HepG2 (cell line): ENCODE measurements at regions of chr4 and their contacts with region 1.

Region 1: DNA sequence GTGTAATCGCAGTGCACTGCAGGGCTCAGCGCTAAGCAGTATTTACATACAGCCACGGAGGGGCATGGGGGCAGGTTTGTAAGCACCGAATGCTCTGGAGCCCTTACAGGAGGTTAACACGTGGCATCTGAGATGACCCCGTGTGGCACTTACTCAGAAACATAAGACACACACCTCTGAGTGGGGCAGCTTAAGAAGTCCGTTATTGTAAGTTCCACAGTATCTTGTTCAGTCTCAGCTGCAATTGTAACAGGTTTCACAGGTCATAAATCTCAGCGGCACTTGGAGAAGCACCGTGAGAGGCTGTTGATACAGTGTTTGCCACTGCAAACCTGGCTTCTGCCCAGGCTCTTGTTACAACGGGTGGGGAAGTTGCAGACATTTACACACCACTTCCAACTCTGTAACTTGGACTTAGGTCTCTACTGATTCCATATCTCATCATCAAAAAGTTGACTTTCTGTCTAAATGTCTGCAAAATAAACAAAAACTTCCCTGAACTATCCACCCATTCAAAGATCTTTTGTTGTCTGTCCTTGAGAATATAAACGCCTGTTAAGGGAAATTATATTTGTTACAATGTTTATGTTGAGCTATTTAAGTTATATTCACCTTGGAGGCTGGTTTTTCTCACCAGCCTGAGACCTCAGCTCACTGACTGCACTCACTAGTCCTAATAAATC is 10.3 kb downstream of the CPLX1 start:
- DNase-seq: peak; percentile 91
- ATAC-seq: peak; percentile 89
- H3K4me3 ChIP-seq: peak overlapping the region in 2 of 3 experiments; percentile 20 to 46; a peak in 2 of 6 replicates
- H3K27ac ChIP-seq: peak overlapping the region; percentile 67
- H3K4me1 ChIP-seq: peaks cover 38% of the 10 kb centered on the region
- H3K27me3 ChIP-seq: peaks cover 1 to 55% of the 10 kb centered on the region in 2 experiments; a peak in 4 of 5 replicates
- CTCF ChIP-seq: no peak
- EP300 ChIP-seq: peak in 1 of 2 experiments; percentile 67; a peak in 3 of 4 replicates
- POLR2A ChIP-seq: no peak
- RAD21 ChIP-seq: no peak

Region 2: GRCh38 chr4:705278-706082 is 110.1 kb before region 1 on chr4 and contains the start of gene PCGF3:
- CTCF ChIA-PET with region 1: no interaction called
- POLR2A ChIA-PET with region 1: no interaction called
- in situ Hi-C with region 1: no loop called
- intact Hi-C with region 1: no loop called
- DNase-seq: peak; percentile 83
- ATAC-seq: peak; percentile 89
- H3K4me3 ChIP-seq: peak within 1 kb of the TSS; percentile 89 to 93 (median 92)
- H3K27ac ChIP-seq: peak within 1 kb of the TSS; percentile 75
- H3K4me1 ChIP-seq: peaks cover 58% of the 10 kb centered on the region
- H3K27me3 ChIP-seq: peaks cover 3 to 12% of the 10 kb centered on the region in 2 experiments; a peak in 2 of 5 replicates
- CTCF ChIP-seq: peak; percentile 7; the same call in 1 of the 2 replicates
- EP300 ChIP-seq: no peak
- POLR2A ChIP-seq: peak in 1 of 2 experiments; percentile 34; a peak in 1 of 4 replicates
- RAD21 ChIP-seq: peak; percentile 19; the same call in 1 of the 2 replicates
- total RNA-seq, gene PCGF3: 24.2 and 28.6 TPM in 2 replicates

Region 3: DNA sequence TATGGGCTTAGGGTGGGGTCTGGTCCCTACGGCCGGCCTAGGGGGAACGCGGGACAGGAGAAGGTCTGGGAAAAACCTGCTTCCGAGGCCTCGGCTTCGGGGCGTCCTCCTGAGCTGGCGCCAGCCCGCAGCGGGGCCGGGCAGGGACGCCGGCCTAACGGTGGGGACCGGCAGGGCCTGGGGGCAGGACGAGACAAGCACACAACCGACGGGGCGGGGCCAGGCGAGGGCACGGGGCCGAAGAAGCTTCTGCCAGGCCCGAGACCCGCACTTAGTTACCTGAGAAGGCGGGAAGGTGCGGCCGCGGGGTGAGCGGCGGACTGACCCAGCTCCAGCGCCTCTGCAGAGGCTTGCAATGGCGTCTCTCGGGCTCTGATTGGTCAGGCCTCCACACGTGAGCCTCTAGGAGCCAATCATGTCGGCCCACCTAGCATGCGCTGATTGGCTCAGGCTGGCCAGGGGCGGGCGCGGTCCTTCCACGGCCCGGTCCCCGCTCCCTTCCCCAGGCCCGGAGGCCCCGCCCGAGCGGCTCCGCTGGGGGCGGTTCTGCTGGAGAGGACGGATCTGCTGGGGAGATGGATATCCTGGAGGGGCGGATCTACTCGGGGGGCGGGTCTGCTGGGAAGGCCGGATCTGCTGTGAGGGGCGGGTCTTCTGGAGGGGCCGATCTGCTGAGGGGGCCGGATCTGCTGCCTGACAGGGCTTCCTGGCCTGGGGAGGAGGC is 34.0 kb before region 1 on chr4:
- CTCF ChIA-PET with region 1: no interaction called
- POLR2A ChIA-PET with region 1: interaction called, 11 read pairs
- in situ Hi-C with region 1: no loop called
- intact Hi-C with region 1: no loop called
- DNase-seq: peak; percentile 97
- ATAC-seq: peak; percentile 92
- H3K4me3 ChIP-seq: peak overlapping the region; percentile 87 to 99 (median 94)
- H3K27ac ChIP-seq: peak overlapping the region; percentile 94
- H3K4me1 ChIP-seq: peaks cover 59% of the 10 kb centered on the region
- H3K27me3 ChIP-seq: no peaks in the 10 kb centered on the region; a peak in 1 of 5 replicates
- CTCF ChIP-seq: no peak
- EP300 ChIP-seq: no peak
- POLR2A ChIP-seq: peak in 1 of 2 experiments; percentile 95; a peak in 2 of 4 replicates
- RAD21 ChIP-seq: 0 out of 2 replicates have a peak, but pooled peaks have one; percentile 46

Region 4: GRCh38 chr4:875818-876423 is 60.3 kb after region 1 on chr4:
- CTCF ChIA-PET with region 1: no interaction called
- POLR2A ChIA-PET with region 1: no interaction called
- in situ Hi-C with region 1: no loop called
- intact Hi-C with region 1: loop called (anchors 1 kb)
- DNase-seq: peak; percentile 29
- ATAC-seq: peak; percentile 55
- H3K4me3 ChIP-seq: no peak overlapping the region
- H3K27ac ChIP-seq: peak overlapping the region; percentile 56
- H3K4me1 ChIP-seq: peaks cover 22% of the 10 kb centered on the region
- H3K27me3 ChIP-seq: no peaks in the 10 kb centered on the region
- CTCF ChIP-seq: 0 out of 2 replicates have a peak, but pooled peaks have one; percentile 16
- EP300 ChIP-seq: no peak
- POLR2A ChIP-seq: no peak
- RAD21 ChIP-seq: no peak

Region 5: GRCh38 chr4:891747-892146 is 76.1 kb after region 1 on chr4:
- CTCF ChIA-PET with region 1: interaction called, 3 read pairs
- POLR2A ChIA-PET with region 1: no interaction called
- in situ Hi-C with region 1: no loop called
- intact Hi-C with region 1: loop called (anchors 5 kb)
- DNase-seq: peak; percentile 10
- ATAC-seq: peak; percentile 58
- H3K4me3 ChIP-seq: no peak overlapping the region
- H3K27ac ChIP-seq: no peak overlapping the region
- H3K4me1 ChIP-seq: no peaks in the 10 kb centered on the region
- H3K27me3 ChIP-seq: no peaks in the 10 kb centered on the region
- CTCF ChIP-seq: peak; percentile 67
- EP300 ChIP-seq: no peak
- POLR2A ChIP-seq: no peak
- RAD21 ChIP-seq: peak; percentile 47; the same call in 1 of the 2 replicates

Region 6: GRCh38 chr4:986879-987623 is 171.4 kb after region 1 on chr4 and contains the start of gene IDUA:
- CTCF ChIA-PET with region 1: no interaction called
- POLR2A ChIA-PET with region 1: interaction called, 8 read pairs
- in situ Hi-C with region 1: loop called (anchors 10 kb)
- intact Hi-C with region 1: loop called (anchors 1 kb)
- DNase-seq: peak; percentile 74
- ATAC-seq: peak; percentile 73
- H3K4me3 ChIP-seq: peak within 1 kb of the TSS; percentile 54 to 75 (median 55)
- H3K27ac ChIP-seq: peak within 1 kb of the TSS; percentile 64
- H3K4me1 ChIP-seq: peaks cover 44% of the 10 kb centered on the region
- H3K27me3 ChIP-seq: peaks cover 0 to 8% of the 10 kb centered on the region in 2 experiments; a peak in 1 of 5 replicates
- CTCF ChIP-seq: peak; percentile 79
- EP300 ChIP-seq: 0 out of 4 replicates have a peak, but pooled peaks of 1 of the 2 experiments have one; percentile 14
- POLR2A ChIP-seq: peak in 1 of 2 experiments; percentile 37; a peak in 2 of 4 replicates
- RAD21 ChIP-seq: peak; percentile 91
- total RNA-seq, gene IDUA: 0.32 and 1.0 TPM in 2 replicates